ENCODE measurements at regions of chr16 and their contacts with region 1.

Region 1: DNA sequence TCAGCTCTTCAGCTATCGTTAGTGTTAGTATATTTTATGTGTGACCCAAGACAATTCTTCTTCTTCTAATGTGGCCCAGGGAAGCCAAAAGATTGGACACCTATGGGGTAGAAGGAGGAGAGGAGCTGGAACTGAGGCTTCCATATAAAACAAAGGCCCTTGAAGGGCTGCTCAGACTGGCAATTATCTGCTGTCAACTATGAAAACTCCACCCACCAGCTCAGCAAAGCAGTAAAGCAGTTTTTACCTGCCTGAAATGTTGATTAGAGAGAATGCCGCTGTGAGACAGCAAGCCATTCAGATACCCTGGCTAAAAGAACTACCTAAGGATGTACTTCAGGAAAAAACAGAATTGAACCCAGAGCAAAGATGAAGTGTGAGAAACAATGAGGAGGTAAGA is 45.9 kb upstream of the GNAO1 start:
- DNase-seq: no peak
- H3K4me3 ChIP-seq: no peak overlapping the region
- H3K27ac ChIP-seq: no peak overlapping the region
- H3K4me1 ChIP-seq: no peaks in the 10 kb centered on the region
- H3K27me3 ChIP-seq: no peaks in the 10 kb centered on the region
- CTCF ChIP-seq: no peak
- POLR2A ChIP-seq: no peak

Region 2: DNA sequence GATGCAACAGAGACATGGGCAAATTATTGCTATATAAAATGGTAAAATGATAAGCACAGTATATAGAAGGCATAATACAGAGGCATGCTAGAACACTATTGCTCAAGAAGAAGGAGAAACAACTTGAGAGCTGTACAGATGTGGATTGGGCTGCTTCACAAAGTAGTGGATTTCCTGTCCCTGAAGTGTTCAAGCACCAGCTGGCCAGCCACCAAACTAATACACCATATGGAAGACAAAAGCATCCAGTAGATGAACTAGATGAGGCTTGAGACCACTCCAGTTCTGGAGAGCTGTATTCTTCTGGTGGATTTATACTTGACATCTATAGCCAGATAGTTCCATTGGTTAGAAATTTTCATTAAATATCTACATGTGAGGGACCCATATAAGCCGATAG is 88.2 kb before region 1 on chr16:
- intact Hi-C with region 1: loop called (anchors 10 kb)
- DNase-seq: no peak
- H3K4me3 ChIP-seq: no peak overlapping the region
- H3K27ac ChIP-seq: no peak overlapping the region
- H3K4me1 ChIP-seq: no peaks in the 10 kb centered on the region
- H3K27me3 ChIP-seq: no peaks in the 10 kb centered on the region
- CTCF ChIP-seq: no peak
- POLR2A ChIP-seq: no peak

Region 3: DNA sequence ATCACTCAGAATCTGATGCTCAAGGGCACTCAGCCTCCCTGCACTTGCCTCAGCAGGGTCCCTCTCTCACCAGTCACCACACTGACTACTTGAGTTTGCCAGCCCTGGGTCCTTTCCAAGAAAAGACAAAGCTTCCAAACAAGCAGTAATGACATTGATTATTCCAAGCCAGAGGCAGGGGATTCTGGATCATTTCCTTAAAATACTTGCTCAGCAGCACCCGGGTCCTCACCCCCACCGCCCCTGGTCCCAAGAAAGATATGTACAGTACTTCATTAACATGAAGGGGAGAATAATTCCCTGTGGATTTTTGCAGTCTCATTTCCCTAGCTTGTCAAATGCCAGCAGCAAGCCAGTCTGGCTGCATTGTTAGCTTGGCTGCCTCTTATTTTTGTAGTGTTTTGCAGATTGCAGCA is 37.3 kb before region 1 on chr16:
- intact Hi-C with region 1: no loop called
- DNase-seq: peak; percentile 58 to 75
- H3K4me3 ChIP-seq: no peak overlapping the region
- H3K27ac ChIP-seq: peak overlapping the region; percentile 14 to 58 (median 52)
- H3K4me1 ChIP-seq: peaks cover 0 to 7% of the 10 kb centered on the region in 2 donors
- H3K27me3 ChIP-seq: no peaks in the 10 kb centered on the region
- CTCF ChIP-seq: no peak
- POLR2A ChIP-seq: no peak